Panc1 (cell line): ENCODE measurements at regions of chr2 and their contacts with region 1.

Region 1: GRCh38 chr2:10344105-10345066 is 41.7 kb downstream of the HPCAL1 start:
- DNase-seq: no peak
- ATAC-seq: peak; percentile 29
- H3K4me3 ChIP-seq: 0 out of 4 replicates have a peak overlapping the region, but pooled peaks of 1 of the 2 experiments have one; percentile 1
- H3K27ac ChIP-seq: peak overlapping the region; percentile 87
- H3K4me1 ChIP-seq: peaks cover 94% of the 10 kb centered on the region
- H3K27me3 ChIP-seq: no peaks in the 10 kb centered on the region
- CTCF ChIP-seq: no peak

Region 2: DNA sequence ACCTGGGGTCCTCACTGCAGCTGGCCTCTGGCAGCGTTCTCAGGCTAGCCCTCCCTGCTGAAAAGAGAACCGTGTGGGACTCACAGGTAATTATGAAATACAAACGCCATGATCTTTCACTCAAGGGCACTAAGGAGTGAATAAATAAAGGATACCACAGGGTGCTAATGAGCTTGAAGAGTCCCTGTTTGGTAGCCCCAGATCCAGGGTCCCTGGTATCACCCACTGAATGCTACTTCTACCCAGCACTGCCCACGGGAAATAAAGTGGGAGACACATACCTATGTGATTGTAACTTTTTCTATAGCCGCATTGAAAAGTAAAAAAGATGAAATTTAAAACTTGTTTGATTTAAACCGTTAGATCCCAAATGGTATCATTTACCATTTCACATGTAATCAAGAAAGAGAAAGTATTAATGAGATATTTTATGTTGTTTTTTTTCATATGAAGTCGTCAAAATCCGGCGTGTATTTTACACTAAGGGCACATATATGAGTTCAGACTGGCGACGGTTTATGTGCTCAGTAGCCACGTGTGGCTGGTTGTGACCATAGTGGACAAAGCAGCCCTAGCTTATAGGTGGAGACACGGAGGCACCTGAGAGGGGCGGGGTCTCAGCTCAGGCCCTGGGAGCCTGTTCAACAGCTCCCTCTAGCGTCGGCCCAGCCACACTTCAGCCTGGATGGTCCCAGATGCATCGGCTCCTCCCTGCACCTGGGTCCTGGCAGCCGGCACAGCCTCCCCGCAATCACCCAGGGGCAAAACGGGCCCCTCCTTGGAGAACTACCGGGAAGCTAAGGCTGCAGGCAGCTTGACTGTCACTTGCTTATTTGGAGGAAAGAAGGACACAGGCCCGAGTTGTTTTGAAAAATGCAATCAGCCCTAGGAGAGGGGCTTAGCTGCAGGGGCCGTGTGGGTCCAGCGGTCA is 64.5 kb after region 1 on chr2:
- CTCF ChIA-PET with region 1: interaction called, 4 read pairs
- POLR2A ChIA-PET with region 1: interaction called, 3 read pairs
- in situ Hi-C with region 1: no loop called
- intact Hi-C with region 1: loop called (anchors 5 kb)
- DNase-seq: peak; percentile 74
- ATAC-seq: peak; percentile 53
- H3K4me3 ChIP-seq: 0 out of 4 replicates have a peak overlapping the region, but pooled peaks of 1 of the 2 experiments have one; percentile 1
- H3K27ac ChIP-seq: peak overlapping the region; percentile 99
- H3K4me1 ChIP-seq: peaks cover 72% of the 10 kb centered on the region
- H3K27me3 ChIP-seq: no peaks in the 10 kb centered on the region
- CTCF ChIP-seq: peak; percentile 98